ENCODE measurements at regions of chr3 and their contacts with region 1.

Region 1: DNA sequence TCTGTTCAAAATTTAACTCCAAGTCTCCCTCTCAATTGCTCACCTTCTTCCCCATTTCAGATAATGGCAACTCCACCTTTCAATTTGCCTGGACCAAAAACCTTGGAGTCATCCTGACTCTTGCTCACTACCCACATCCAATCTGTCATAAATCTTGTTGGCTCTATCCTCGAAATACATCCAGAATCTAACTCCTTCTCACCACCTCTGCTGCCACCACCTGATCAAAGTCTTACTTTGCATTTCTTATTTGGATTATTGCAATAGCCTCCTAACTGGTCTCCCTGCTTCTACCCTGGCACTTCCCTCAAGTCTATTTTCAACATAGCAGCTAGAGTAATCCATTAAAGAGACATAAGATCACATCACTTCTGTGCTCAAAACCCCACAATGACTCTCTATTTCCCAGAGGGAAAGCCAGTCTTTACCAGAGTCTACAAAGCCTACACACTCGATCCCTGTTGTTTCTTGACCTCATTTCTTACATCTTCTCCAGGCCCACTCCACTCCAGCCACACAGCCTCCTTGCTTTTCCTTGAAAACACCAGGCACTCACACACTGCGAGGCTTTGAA is 86.6 kb downstream of the GPR156 start:
- DNase-seq: peak; percentile 52
- H3K4me3 ChIP-seq: no peak overlapping the region
- H3K27ac ChIP-seq: no peak overlapping the region
- H3K4me1 ChIP-seq: peaks cover 8% of the 10 kb centered on the region
- H3K27me3 ChIP-seq: no peaks in the 10 kb centered on the region

Region 2: DNA sequence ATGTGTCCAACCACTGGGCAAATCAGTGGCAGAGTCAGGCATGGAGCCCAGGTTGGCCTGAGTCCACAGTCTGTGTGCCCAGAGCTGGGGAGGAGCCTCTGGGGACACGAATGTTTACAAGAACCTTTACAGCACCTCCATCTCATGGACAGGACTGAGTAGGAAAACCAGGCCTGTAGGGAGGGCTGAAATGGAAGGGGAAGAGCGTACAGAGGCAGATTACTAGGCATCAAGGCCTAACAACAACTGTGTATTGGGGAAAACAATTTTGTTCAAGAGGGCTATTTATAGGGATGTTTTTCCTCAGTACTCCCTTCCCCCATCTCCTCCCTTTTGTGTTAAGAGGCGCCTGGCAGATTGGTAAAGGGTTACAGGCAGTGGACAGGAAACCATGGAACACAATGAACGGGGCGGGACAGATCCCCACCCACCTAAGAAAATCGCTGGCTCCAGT is 919.3 kb before region 1 on chr3:
- in situ Hi-C with region 1: no loop called
- DNase-seq: no peak
- H3K4me3 ChIP-seq: no peak overlapping the region
- H3K27ac ChIP-seq: no peak overlapping the region
- H3K4me1 ChIP-seq: no peaks in the 10 kb centered on the region
- H3K27me3 ChIP-seq: no peaks in the 10 kb centered on the region

Region 3: DNA sequence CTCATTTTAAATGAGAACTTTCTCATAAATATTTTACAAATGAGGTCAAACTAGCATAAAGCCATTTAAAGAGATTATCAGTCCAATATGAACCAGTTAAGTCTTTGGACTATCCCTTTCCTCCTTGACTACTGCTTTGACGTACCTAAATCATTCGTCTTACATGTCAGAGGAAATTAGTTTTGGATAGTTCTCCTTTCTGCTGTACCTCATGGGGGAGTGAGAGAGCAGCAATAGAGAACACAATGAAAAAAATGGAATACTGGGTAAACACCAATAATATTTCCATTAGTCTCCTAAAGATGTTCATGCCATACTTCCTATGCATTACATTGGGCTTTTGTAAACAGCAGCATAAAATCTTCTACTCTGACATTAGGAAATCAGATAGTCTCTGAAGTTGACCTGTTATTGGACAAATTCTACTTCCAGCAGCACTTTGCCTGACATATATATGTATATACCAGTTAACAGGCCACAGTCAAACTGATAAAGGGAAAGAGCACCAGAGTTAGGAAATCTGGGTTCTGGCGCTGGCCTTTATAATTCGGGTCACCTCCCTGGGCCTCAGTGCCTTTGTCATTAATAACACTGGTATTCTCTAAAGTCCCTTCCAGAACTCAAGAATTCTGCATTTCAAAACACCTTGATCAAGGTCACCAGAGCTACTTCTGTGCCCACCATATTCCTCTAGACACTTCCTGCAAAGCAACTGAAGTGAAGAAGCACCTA is 673.3 kb before region 1 on chr3:
- in situ Hi-C with region 1: loop called (anchors 25 kb)
- DNase-seq: peak; percentile 44
- H3K4me3 ChIP-seq: no peak overlapping the region
- H3K27ac ChIP-seq: no peak overlapping the region
- H3K4me1 ChIP-seq: peaks cover 6% of the 10 kb centered on the region
- H3K27me3 ChIP-seq: no peaks in the 10 kb centered on the region

Region 4: DNA sequence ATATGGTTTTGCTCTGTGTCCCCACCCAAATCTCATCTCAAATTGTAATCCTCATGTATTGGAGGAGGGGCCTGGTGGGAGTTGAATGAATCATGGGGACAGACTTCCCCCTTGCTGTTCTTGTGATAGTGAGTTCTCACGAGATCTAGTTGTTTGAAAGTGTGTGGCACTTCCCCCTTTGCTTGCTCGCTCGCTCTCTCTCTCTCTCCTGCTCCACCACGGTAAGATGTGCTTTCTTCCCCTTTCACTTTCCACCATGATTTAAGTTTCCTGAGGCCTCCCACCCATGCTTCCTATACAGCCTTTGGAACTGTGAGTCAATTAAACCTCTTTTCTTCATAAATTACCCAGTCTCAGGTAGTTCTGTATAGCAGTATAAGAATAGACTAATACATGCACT is 164.8 kb before region 1 on chr3:
- in situ Hi-C with region 1: no loop called
- DNase-seq: no peak
- H3K4me3 ChIP-seq: no peak overlapping the region
- H3K27ac ChIP-seq: no peak overlapping the region
- H3K4me1 ChIP-seq: no peaks in the 10 kb centered on the region
- H3K27me3 ChIP-seq: no peaks in the 10 kb centered on the region